Ovary (tissue), 10 donors: ENCODE measurements at regions of chr1 and their contacts with region 1.

Region 1: DNA sequence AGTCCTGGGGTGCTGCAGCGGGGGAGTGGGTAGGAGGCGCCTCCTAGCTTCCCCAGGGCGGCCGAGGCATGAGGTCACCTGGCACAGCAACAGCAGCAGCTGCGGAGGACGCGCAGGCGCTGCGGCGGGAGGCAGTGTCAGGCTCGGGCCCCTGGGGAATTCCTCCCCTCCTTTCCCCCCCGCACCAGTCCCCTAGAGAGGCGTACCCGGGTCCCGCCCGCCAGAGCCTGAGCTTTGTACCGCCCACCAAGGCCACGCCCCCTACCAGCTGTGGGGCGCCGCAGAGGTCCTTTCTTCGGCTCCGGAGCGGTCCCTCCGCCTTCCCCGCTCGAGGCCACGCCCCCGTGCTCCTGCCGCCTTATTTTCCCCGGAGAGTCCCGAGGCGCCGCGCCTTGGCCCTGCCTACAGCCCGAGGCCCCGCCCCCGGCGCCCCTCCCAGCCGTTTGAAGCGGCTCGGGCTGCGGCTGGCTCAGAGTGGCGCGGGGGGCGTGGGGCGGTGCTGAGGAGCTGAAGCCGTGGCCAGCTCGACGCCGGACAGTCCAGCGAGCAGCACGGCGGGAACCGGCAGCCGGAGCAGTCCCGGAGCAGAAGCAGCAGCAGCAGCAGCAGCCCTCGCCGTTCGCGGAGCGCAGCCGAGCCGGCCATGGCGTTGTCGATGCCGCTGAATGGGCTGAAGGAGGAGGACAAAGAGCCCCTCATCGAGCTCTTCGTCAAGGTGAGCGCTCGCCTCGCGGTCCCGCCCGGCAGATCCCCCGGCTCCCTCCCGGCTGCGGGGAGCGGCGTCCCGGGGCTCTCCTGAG is at the start of gene CLIC4:
- DNase-seq: peak; percentile 100
- H3K4me3 ChIP-seq: peak within 1 kb of the TSS; percentile 89
- H3K27ac ChIP-seq: peak within 1 kb of the TSS; percentile 81 to 90
- H3K4me1 ChIP-seq: peaks cover 7% of the 10 kb centered on the region
- H3K27me3 ChIP-seq: no peaks in the 10 kb centered on the region
- CTCF ChIP-seq: peak in 1 of 3 donors; percentile 21
- EP300 ChIP-seq: no peak
- POLR2A ChIP-seq: peak; percentile 99
- total RNA-seq, gene CLIC4: 73.6 to 185 (median 125) TPM

Region 2: DNA sequence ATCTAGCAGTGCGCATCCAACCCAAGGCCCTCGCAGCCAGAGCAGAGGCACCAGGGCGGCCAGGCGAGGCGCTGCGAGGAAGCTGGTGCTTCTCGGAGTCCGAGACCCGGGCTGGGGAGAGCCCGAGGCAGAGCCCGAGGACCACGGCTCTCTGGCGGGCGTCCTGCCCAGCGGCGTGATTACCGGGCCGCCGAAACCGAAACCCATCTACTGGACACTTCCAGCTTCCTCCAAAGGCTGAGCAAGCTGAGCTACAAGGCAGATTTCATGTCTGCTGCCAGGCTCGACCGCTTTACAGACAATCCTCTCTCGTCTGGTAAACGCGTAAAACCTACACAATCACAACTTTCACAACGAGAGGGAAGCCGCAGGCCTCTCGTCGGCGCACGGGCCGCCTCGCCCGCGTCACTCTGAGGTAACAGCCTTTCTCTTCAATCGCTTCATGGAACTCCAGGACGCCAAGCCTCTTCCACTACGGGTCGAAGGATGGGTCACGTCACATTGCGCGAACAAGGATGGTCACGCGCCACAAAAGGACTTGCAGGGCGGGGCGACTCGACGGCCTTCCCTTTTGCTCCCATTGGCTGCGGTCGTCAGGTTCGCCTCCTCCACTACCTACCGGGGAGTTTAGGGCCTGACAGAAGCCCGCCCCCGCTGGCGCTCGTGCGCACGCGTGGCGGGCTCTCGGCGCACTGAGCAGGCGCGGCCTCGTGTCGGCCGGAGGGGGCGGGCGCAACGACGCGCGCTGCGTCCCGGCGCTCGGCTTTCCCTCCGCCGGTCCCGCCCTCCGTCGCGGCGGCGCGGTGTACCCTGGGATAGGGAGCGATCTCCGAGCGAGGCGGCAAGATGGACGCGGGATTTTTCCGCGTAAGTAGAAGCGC is 102.4 kb before region 1 on chr1 and contains the start of gene SRRM1:
- intact Hi-C with region 1: loop called in 1 of 4 experiments (anchors 5 kb)
- DNase-seq: peak; percentile 98 to 99 (median 99)
- H3K4me3 ChIP-seq: peak within 1 kb of the TSS; percentile 94
- H3K27ac ChIP-seq: peak within 1 kb of the TSS; percentile 96 to 97
- H3K4me1 ChIP-seq: peaks cover 6% of the 10 kb centered on the region
- H3K27me3 ChIP-seq: no peaks in the 10 kb centered on the region
- CTCF ChIP-seq: peak in 2 of 3 donors; percentile 14 to 29
- EP300 ChIP-seq: peak; percentile 88
- POLR2A ChIP-seq: peak; percentile 99
- total RNA-seq, gene SRRM1: 108 to 154 (median 123) TPM

Region 3: DNA sequence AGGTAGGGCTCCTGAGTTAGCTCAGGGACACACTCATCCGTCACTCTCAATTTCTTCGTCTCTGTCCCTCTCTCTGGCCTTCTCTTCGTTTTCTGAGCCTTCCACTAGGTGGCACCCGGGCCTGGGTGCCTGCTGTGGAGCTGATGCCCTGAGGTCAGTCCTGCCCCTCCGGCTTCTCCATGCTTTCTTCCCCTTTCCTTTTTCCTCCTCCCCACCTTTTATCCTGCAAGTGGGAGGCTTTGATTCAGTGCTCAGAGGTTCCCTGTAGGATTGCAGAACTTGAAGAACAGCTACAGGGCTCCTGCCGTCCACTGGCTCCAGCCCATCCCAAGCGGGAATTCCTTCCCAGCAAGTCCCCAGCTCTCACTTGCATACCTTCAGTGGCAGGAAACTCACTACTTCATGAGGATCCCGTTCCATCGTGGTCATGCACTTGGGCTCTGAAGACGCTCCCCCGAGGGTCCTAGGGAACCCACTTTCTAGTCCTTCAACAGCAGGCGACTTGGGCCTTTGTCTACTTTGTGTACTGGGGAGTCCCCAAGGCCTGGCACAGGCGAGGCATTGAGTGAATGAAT is 56.4 kb before region 1 on chr1:
- intact Hi-C with region 1: loop called in 1 of 4 experiments (anchors 10 kb)
- DNase-seq: peak; percentile 66 to 80 (median 73)
- H3K4me3 ChIP-seq: no peak overlapping the region
- H3K27ac ChIP-seq: no peak overlapping the region
- H3K4me1 ChIP-seq: no peaks in the 10 kb centered on the region
- H3K27me3 ChIP-seq: no peaks in the 10 kb centered on the region
- CTCF ChIP-seq: peak; percentile 72 to 79 (median 77)
- EP300 ChIP-seq: no peak
- POLR2A ChIP-seq: peak; percentile 21

Region 4: GRCh38 chr1:24822887-24823286 is 77.8 kb after region 1 on chr1:
- intact Hi-C with region 1: loop called in 2 of 4 experiments (anchors 1 to 5 kb)
- DNase-seq: no peak
- H3K4me3 ChIP-seq: no peak overlapping the region
- H3K27ac ChIP-seq: no peak overlapping the region
- H3K4me1 ChIP-seq: peaks cover 1% of the 10 kb centered on the region
- H3K27me3 ChIP-seq: no peaks in the 10 kb centered on the region
- CTCF ChIP-seq: no peak
- EP300 ChIP-seq: no peak
- POLR2A ChIP-seq: no peak

Region 5: DNA sequence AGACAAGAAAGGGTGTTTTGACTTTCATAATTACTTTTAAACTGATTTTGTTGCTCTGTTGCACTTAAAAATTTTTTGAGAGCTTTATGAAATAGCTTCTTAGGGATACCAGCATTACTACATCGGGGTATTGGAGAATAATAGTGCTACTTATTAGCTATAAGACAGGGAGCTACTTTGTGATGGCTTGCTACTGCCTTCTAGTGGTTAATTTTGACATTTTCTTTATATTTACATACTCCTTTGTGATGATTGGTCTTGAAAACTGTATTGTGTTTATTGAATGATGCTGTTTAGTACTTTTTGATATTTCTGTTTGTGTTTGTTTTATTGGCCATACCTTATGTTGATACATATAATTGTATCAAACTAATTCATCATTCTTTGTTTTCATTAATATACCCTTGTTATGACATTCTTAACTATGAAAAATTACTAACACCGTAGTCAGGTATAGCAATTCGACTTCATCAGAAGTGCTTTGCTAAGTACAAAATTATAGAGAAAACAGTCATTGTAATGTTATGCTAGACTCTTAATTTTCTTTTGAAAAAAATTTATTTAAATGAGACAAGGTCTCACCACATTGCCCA is 85.7 kb after region 1 on chr1:
- intact Hi-C with region 1: loop called in 1 of 4 experiments (anchors 5 kb)
- DNase-seq: no peak
- H3K4me3 ChIP-seq: no peak overlapping the region
- H3K27ac ChIP-seq: no peak overlapping the region
- H3K4me1 ChIP-seq: peaks cover 3% of the 10 kb centered on the region
- H3K27me3 ChIP-seq: no peaks in the 10 kb centered on the region
- CTCF ChIP-seq: peak; percentile 57 to 81 (median 68)
- EP300 ChIP-seq: no peak
- POLR2A ChIP-seq: no peak

Region 6: GRCh38 chr1:25167331-25168199 is 422.5 kb after region 1 on chr1:
- intact Hi-C with region 1: no loop called
- DNase-seq: no peak
- H3K4me3 ChIP-seq: no peak overlapping the region
- H3K27ac ChIP-seq: no peak overlapping the region
- H3K4me1 ChIP-seq: no peaks in the 10 kb centered on the region
- H3K27me3 ChIP-seq: no peaks in the 10 kb centered on the region
- CTCF ChIP-seq: no peak
- EP300 ChIP-seq: no peak
- POLR2A ChIP-seq: no peak